Ascending aorta (tissue), 2 donors: ENCODE measurements at regions of chr10 and their contacts with region 1.

Region 1: DNA sequence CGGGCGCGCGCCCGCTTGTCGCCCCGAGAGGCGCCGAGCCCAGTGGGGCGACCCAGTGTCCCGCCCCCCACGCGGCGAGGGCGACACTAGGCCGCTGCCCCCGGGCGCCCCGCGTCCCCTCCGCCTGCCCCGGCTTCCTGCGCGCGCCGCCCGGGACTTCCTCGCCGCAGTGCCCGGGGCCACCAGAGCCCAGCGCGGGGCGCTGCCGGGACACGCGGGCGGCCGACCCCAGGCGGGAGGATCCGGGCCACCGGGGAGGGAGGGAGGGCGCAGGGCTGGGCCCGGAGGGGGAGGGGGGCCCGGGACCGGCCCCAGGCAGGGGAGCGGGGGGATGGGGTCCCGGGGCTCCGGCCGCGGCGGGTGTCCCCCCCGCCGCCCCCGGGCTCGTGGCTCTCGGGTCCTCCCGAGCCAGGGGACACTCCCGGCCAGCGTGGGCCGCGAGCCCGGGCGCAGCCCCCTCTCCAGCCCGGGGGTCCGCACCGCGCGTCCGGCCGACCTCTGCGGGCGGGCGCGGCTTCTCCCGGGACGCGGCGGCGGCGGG is 435 bp upstream of the PWWP2B start:
- DNase-seq: peak in 1 of 2 donors; percentile 81
- H3K4me3 ChIP-seq: peak overlapping the region; percentile 74 to 90
- H3K27ac ChIP-seq: peak overlapping the region; percentile 91 to 95
- H3K4me1 ChIP-seq: peaks cover 3 to 26% of the 10 kb centered on the region in 2 donors
- H3K27me3 ChIP-seq: no peaks in the 10 kb centered on the region
- CTCF ChIP-seq: peak; percentile 13 to 53 (median 32)

Region 2: DNA sequence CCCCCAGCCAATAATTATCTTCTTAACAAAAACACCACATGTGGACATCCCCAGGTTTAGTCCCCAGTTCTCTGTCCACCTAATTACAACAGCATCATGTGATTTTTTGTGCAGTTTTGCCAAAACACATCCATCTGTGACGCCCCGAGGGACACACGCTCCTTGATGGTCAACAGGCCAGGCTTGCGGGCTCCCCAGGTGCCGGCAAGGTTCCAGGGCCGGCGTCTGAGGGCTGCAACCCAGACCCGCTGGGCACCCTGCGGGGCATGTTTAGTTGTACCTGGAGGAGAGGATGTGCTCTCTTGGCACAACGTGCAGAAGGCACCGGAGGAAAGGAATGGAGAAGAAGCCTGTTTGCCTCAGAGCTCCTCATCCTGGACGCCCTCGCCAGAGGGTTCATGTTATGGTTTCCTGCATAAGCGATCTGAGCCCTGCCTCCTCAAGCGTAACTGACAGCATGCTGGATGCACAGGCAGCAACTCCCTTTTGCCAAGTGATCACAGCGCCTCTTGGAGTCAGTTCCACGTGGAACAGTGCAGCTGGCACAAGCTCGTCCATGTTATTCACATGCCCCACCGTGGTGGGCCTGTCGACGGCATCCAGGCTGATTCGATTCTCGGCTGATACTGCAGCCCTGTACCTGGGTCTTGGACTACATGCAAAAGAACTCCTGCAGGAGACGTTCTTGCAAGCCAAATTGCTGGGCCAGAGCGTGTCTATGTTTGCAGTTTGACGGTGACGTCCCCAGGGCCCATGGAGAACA is 289.2 kb before region 1 on chr10:
- intact Hi-C with region 1: no loop called
- DNase-seq: no peak
- H3K4me3 ChIP-seq: no peak overlapping the region
- H3K27ac ChIP-seq: no peak overlapping the region
- H3K4me1 ChIP-seq: no peaks in the 10 kb centered on the region
- H3K27me3 ChIP-seq: no peaks in the 10 kb centered on the region
- CTCF ChIP-seq: no peak

Region 3: GRCh38 chr10:132421392-132421877 is 24.9 kb after region 1 on chr10:
- intact Hi-C with region 1: loop called (anchors 1 kb)
- DNase-seq: peak; percentile 58 to 89
- H3K4me3 ChIP-seq: peak overlapping the region; percentile 18 to 56
- H3K27ac ChIP-seq: peak overlapping the region; percentile 84 to 86
- H3K4me1 ChIP-seq: peaks cover 13 to 31% of the 10 kb centered on the region in 2 donors
- H3K27me3 ChIP-seq: no peaks in the 10 kb centered on the region
- CTCF ChIP-seq: no peak